PC-9 (cell line): ENCODE measurements at regions of chr10 and their contacts with region 1.

Region 1: DNA sequence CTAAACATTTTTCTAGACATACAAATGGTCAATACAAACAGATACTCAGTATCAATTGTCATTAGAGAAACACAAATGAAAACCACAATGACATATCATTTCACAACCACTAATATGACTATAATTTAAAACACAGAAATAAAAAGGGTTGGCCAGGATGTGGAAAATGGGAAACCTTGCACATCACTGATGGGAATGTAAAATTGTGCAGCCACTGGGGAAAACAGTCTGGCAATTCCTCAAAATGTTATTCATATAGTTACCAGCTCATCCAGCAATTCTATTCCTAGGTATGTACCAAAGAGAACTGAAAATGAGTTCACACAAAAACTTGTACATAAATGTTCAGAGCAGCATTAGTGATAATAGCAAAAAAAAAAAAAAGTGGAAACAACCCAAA is 106.1 kb upstream of the LRRTM3 start:
- DNase-seq: no peak
- H3K4me3 ChIP-seq: no peak overlapping the region
- H3K27ac ChIP-seq: no peak overlapping the region
- H3K4me1 ChIP-seq: no peaks in the 10 kb centered on the region
- H3K27me3 ChIP-seq: no peaks in the 10 kb centered on the region
- CTCF ChIP-seq: no peak

Region 2: DNA sequence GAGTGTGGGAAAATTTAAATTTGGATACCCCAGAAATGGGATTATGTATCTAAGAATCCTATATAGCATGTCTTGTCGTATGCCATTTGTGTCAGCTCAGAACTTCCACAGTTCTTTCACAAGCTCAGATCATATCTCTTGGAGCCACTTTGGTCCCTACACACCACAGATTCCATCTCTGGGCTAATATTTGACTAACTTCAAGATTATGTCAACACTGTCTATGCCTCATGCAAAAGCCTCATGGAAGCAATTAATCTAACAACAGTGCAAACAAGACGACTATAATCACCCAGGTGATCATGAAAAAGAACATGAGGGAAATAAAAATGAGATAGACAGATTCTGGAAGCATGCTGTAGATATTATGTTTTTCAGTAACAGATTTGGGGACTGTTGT is 295.2 kb after region 1 on chr10:
- CTCF ChIA-PET with region 1: no interaction called
- POLR2A ChIA-PET with region 1: interaction called, 15 read pairs
- intact Hi-C with region 1: no loop called
- DNase-seq: no peak
- H3K4me3 ChIP-seq: no peak overlapping the region
- H3K27ac ChIP-seq: no peak overlapping the region
- H3K4me1 ChIP-seq: no peaks in the 10 kb centered on the region; the same call in 1 of the 2 replicates
- H3K27me3 ChIP-seq: no peaks in the 10 kb centered on the region
- CTCF ChIP-seq: no peak